ENCODE measurements at regions of chr1 and their contacts with region 1.

Region 1: DNA sequence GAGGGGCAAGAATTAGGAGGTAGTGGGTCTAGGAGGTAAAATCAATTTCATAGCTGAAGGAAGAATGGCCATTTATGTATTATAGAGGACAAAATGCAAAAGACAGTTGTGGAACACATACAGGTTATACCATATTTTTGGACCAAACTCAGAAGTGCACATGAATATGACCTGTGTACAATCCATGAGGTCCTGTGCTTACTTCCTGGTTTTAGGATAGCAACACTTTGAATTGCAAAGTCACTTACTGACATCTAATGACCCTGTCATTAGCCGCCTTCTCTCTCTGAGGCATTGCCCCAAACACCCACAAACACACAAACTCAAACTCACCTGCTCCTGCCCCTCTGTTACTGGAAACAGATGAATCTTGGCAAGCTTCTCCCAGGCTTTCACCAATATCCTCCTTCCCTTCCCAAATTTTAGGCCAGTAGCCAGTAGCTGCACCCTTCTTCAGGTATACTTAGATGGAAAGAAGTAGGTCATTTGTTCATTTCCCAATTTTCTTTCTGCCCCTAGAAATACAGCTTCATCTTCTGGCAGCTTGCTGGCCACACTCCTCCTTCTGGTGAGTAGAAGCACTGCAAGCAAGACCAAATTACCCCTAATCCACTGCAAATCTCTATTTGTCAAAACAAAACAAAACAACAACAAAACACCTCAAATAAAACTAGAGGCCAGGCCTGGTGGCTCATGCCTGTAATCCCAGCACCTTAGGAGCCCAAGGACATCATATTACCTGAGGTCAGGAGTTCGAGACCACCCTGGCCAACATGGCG is 13.7 kb upstream of the RPL5 start:
- DNase-seq: peak; percentile 37
- H3K4me3 ChIP-seq: no peak overlapping the region
- H3K27ac ChIP-seq: no peak overlapping the region
- H3K4me1 ChIP-seq: no peaks in the 10 kb centered on the region
- H3K27me3 ChIP-seq: no peaks in the 10 kb centered on the region
- CTCF ChIP-seq: peak; percentile 81

Region 2: GRCh38 chr1:91997607-91998195 is 820.5 kb before region 1 on chr1:
- CTCF ChIA-PET with region 1: no interaction called
- POLR2A ChIA-PET with region 1: no interaction called
- intact Hi-C with region 1: loop called (anchors 10 kb)
- DNase-seq: peak; percentile 72
- H3K4me3 ChIP-seq: no peak overlapping the region
- H3K27ac ChIP-seq: no peak overlapping the region
- H3K4me1 ChIP-seq: no peaks in the 10 kb centered on the region
- H3K27me3 ChIP-seq: no peaks in the 10 kb centered on the region
- CTCF ChIP-seq: peak; percentile 77

Region 3: GRCh38 chr1:92310185-92310597 is 508.0 kb before region 1 on chr1:
- CTCF ChIA-PET with region 1: interaction called, 15 read pairs
- POLR2A ChIA-PET with region 1: no interaction called
- intact Hi-C with region 1: loop called (anchors 2 kb)
- DNase-seq: peak; percentile 52
- H3K4me3 ChIP-seq: no peak overlapping the region
- H3K27ac ChIP-seq: no peak overlapping the region
- H3K4me1 ChIP-seq: no peaks in the 10 kb centered on the region
- H3K27me3 ChIP-seq: no peaks in the 10 kb centered on the region
- CTCF ChIP-seq: peak; percentile 64

Region 4: DNA sequence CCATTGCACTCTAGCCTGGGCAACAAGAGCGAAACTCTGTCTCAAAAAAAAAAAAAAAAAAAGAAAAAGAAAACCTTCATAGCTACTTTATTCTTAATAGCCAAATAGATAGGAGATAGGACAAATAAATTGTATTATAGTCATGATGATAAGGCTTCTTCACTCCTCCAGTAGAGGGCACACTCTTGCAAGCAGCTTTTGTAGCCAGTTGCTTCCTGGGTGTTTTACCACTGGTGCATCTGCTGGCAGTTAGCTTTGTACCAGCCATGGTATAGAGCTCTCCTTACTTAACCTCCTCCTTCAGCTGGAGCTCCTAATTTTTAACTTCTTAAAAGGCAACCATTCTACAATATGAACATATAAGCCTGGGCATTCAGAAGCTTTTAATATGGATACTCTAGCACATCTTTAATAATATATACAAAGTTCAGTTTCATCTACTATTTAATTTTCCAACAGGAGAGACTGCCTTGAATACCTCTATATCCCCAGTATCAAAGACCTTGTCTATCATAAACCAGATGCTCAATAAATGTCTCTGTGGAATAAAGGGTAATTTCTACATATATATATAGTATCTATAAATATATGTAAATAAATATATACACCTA is 69.0 kb before region 1 on chr1:
- CTCF ChIA-PET with region 1: interaction called, 31 read pairs
- POLR2A ChIA-PET with region 1: no interaction called
- intact Hi-C with region 1: loop called (anchors 5 kb)
- DNase-seq: peak; percentile 81
- H3K4me3 ChIP-seq: no peak overlapping the region
- H3K27ac ChIP-seq: no peak overlapping the region
- H3K4me1 ChIP-seq: peaks cover 4% of the 10 kb centered on the region
- H3K27me3 ChIP-seq: no peaks in the 10 kb centered on the region
- CTCF ChIP-seq: peak; percentile 77

Region 5: DNA sequence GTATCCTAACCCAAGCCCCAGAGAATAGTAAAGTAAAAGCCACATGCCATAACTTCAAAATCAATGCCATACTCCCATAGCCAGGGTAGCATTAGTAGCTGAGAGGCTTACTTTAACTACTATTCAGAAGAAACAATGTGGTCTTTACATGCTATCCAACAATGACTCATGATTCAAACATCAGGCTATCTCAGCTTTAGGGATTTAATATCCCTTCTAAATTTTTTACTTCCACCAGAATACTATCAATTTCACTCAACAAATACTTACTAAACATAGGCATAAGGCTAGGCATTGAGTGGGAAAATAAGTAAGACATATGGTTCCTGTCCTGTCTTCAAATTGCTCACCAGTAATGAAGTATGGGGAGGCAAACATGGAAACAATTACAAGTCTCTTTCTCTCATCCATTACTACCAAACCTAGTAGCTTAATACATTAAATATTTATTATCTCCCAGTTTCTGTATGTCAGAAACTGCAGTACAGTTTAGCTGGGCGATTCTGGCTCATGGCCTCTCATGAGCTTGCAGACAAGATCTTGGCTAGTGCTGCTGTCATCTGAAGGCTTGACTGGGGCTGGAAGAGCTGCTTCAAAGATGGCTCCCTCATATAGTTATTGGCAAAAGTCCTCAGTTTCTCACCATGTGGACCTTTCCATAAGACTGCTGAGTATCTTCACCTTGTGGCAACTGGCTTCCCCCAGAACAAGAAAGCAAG is 64.0 kb before region 1 on chr1:
- CTCF ChIA-PET with region 1: interaction called, 31 read pairs
- POLR2A ChIA-PET with region 1: no interaction called
- intact Hi-C with region 1: loop called (anchors 5 kb)
- DNase-seq: peak; percentile 28
- H3K4me3 ChIP-seq: no peak overlapping the region
- H3K27ac ChIP-seq: no peak overlapping the region
- H3K4me1 ChIP-seq: no peaks in the 10 kb centered on the region
- H3K27me3 ChIP-seq: no peaks in the 10 kb centered on the region
- CTCF ChIP-seq: no peak

Region 6: DNA sequence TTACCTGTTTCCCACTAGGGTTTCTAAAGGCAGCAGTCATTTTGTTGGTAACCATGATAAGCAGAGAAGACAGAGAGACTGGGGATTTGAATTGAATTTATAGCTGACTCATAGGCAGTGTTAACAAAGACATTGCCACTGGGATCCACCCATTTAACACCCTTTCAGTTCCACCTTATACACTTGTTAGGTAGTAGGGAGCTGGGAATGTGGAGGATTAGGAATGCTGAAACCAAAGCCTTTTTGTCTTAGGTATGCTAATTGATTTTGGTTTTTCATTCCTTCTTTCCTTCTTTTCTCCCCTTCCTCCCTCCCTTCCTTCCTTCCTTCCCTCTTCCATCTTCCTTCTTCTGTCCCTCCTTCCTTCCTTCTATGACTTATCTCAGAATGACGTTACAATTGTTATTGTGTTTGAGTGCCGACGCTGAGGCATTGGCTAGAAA is 25.8 kb before region 1 on chr1:
- CTCF ChIA-PET with region 1: no interaction called
- POLR2A ChIA-PET with region 1: no interaction called
- intact Hi-C with region 1: no loop called
- DNase-seq: peak; percentile 28
- H3K4me3 ChIP-seq: no peak overlapping the region
- H3K27ac ChIP-seq: no peak overlapping the region
- H3K4me1 ChIP-seq: peaks cover 11% of the 10 kb centered on the region
- H3K27me3 ChIP-seq: no peaks in the 10 kb centered on the region
- CTCF ChIP-seq: no peak

Region 7: GRCh38 chr1:92831762-92832536 is 13.8 kb after region 1 on chr1 and contains the start of gene RPL5:
- CTCF ChIA-PET with region 1: interaction called, 12 read pairs
- POLR2A ChIA-PET with region 1: no interaction called
- intact Hi-C with region 1: no loop called
- DNase-seq: peak; percentile 99
- H3K4me3 ChIP-seq: peak within 1 kb of the TSS; percentile 94
- H3K27ac ChIP-seq: peak within 1 kb of the TSS; percentile 95
- H3K4me1 ChIP-seq: peaks cover 25% of the 10 kb centered on the region
- H3K27me3 ChIP-seq: no peaks in the 10 kb centered on the region
- CTCF ChIP-seq: peak; percentile 96
- total RNA-seq, gene RPL5: 1,348 and 1,415 TPM in 2 replicates